CD8-positive, alpha-beta T cell (primary cell): ENCODE measurements at regions of chr21 and their contacts with region 1.

Region 1: GRCh38 chr21:44618504-44618903 is 6.6 kb downstream of the KRTAP10-8 start:
- DNase-seq: peak in 2 of 9 experiments; percentile 44 to 51
- ATAC-seq: peak; percentile 46
- H3K4me3 ChIP-seq: peak overlapping the region; percentile 6 to 12
- H3K4me3 Mint-ChIP-seq: peak overlapping the region; percentile 35
- H3K27ac ChIP-seq: peak overlapping the region; percentile 33 to 85
- H3K27ac Mint-ChIP-seq: peak overlapping the region; percentile 92
- H3K4me1 ChIP-seq: peaks cover 45% of the 10 kb centered on the region
- H3K4me1 Mint-ChIP-seq: peaks cover 57% of the 10 kb centered on the region
- H3K27me3 ChIP-seq: no peaks in the 10 kb centered on the region
- H3K27me3 Mint-ChIP-seq: no peaks in the 10 kb centered on the region
- CTCF ChIP-seq: no peak

Region 2: GRCh38 chr21:44709426-44710293 is 91.2 kb after region 1 on chr21:
- CTCF ChIA-PET with region 1: no interaction called
- POLR2A ChIA-PET with region 1: interaction called, 4 read pairs
- intact Hi-C with region 1: loop called in 1 of 2 experiments (anchors 5 kb)
- DNase-seq: peak in 4 of 9 experiments; percentile 39 to 60 (median 46)
- ATAC-seq: peak; percentile 42
- H3K4me3 ChIP-seq: peak overlapping the region in 1 of 2 experiments; percentile 20
- H3K4me3 Mint-ChIP-seq: peak overlapping the region; percentile 60
- H3K27ac ChIP-seq: no peak overlapping the region
- H3K27ac Mint-ChIP-seq: no peak overlapping the region
- H3K4me1 ChIP-seq: peaks cover 38% of the 10 kb centered on the region
- H3K4me1 Mint-ChIP-seq: peaks cover 27% of the 10 kb centered on the region
- H3K27me3 ChIP-seq: peaks cover 47 to 57% of the 10 kb centered on the region in 2 experiments
- H3K27me3 Mint-ChIP-seq: peaks cover 72% of the 10 kb centered on the region
- CTCF ChIP-seq: no peak